SK-MEL-5 (cell line): ENCODE measurements at regions of chr1 and their contacts with region 1.

Region 1: GRCh38 chr1:28602536-28603439 is 10.7 kb downstream of the RAB42 start:
- DNase-seq: peak; percentile 87

Region 2: DNA sequence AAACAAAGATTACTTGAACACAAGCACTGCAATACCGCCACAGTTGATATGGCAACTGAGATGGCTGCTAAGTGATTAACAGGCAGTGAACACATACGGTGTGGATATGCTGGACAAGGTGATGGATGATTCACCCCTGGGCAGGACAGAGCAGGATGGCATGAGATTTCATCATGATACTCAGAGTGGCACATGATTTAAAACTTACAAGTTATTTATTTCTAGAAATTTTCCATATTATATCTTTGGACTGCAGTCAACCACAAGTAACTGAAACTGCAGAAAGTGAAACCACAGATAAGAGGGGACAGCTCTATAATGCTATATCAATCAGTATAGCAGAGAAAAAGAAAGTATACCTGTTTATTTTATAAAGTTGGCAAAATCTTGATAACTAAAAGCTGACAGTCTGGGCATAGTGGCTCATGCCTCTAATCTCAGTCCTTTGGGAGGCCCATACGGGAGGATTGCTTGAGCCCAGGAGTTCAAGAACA is 185.3 kb before region 1 on chr1:
- in situ Hi-C with region 1: loop called (anchors 25 kb)
- DNase-seq: no peak

Region 3: GRCh38 chr1:28456078-28456477 is 146.7 kb before region 1 on chr1:
- in situ Hi-C with region 1: no loop called
- DNase-seq: peak; percentile 55